ENCODE measurements at regions of chr10 and their contacts with region 1.

Region 1: GRCh38 chr10:5023177-5023805 is 19.6 kb upstream of the AKR1C2 start:
- DNase-seq: no peak
- H3K4me3 ChIP-seq: no peak overlapping the region
- H3K27ac ChIP-seq: no peak overlapping the region
- H3K4me1 ChIP-seq: peaks cover 37% of the 10 kb centered on the region
- H3K27me3 ChIP-seq: no peaks in the 10 kb centered on the region
- CTCF ChIP-seq: no peak

Region 2: DNA sequence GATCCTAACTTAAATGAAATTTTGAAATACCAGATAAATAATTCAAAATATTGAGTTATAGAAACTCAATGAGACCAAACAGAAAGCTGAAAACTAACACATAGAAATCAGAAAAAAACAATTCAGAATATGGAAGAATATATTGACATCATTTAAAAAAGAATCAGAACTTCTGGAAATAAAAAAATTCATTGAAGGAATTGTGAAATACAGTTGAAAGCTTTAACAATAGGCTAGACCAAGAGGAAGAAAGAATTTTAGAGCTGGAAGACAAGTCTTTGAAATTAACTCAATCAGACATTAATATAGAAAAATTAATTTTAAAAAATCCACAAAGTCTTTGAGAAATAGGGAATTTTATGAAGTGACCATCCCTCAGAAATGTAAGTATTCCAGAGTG is 96.9 kb before region 1 on chr10:
- CTCF ChIA-PET with region 1: no interaction called
- dilution Hi-C with region 1: no loop called
- in situ Hi-C with region 1: no loop called
- intact Hi-C with region 1: no loop called
- DNase-seq: no peak
- H3K4me3 ChIP-seq: no peak overlapping the region
- H3K27ac ChIP-seq: no peak overlapping the region
- H3K4me1 ChIP-seq: peaks cover under 1% of the 10 kb centered on the region
- H3K27me3 ChIP-seq: no peaks in the 10 kb centered on the region
- CTCF ChIP-seq: no peak

Region 3: GRCh38 chr10:4941540-4942330 is 81.6 kb before region 1 on chr10:
- CTCF ChIA-PET with region 1: no interaction called
- dilution Hi-C with region 1: loop called (anchors 5 kb)
- in situ Hi-C with region 1: no loop called
- intact Hi-C with region 1: no loop called
- DNase-seq: peak; percentile 48
- H3K4me3 ChIP-seq: no peak overlapping the region
- H3K27ac ChIP-seq: peak overlapping the region; percentile 49
- H3K4me1 ChIP-seq: peaks cover 33% of the 10 kb centered on the region
- H3K27me3 ChIP-seq: no peaks in the 10 kb centered on the region
- CTCF ChIP-seq: no peak

Measured in mammary epithelial cell (primary cell).